Common myeloid progenitor, CD34-positive (primary cell): ENCODE measurements at regions of chr3 and their contacts with region 1.

Region 1: GRCh38 chr3:138915503-138916498 is 31.1 kb downstream of the FOXL2 start:
- DNase-seq: peak; percentile 93 to 97 (median 97)
- H3K4me3 ChIP-seq: peak overlapping the region; percentile 65 to 92 (median 83)
- H3K27ac ChIP-seq: peak overlapping the region; percentile 78 to 90
- H3K4me1 ChIP-seq: peaks cover 0 to 14% (median 9%) of the 10 kb centered on the region in 4 experiments
- H3K27me3 ChIP-seq: peaks cover 0 to 2% (median 0%) of the 10 kb centered on the region in 5 experiments

Region 2: DNA sequence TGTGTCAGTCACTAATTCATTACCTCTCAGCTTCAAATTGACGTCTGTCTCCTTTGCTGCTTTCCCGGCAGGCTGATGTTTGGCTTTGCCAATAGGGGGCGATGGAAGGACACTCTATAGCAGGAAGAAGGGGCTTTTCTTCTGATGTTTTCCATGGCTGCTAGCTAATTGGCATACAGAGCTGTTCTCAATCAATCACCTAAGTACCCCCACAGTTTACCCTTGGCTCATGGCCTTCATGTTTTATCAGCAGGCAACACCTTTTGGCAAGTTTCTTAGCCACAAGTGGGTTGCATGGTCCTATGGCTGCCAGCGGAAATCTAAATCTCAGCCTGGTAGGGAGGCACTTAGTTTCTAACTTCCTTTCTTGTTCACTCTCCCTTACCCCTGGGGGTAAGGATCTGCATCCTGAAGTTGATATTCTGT is 436.4 kb before region 1 on chr3:
- CTCF ChIA-PET with region 1: interaction called, 11 read pairs
- POLR2A ChIA-PET with region 1: no interaction called
- DNase-seq: peak; percentile 69 to 91 (median 84)
- H3K4me3 ChIP-seq: no peak overlapping the region
- H3K27ac ChIP-seq: no peak overlapping the region
- H3K4me1 ChIP-seq: peaks cover 0 to 4% (median 0%) of the 10 kb centered on the region in 4 experiments
- H3K27me3 ChIP-seq: no peaks in the 10 kb centered on the region

Region 3: GRCh38 chr3:138686771-138687221 is 229.0 kb before region 1 on chr3:
- CTCF ChIA-PET with region 1: interaction called, 51 read pairs
- POLR2A ChIA-PET with region 1: interaction called, 5 read pairs
- DNase-seq: peak; percentile 91 to 98 (median 96)
- H3K4me3 ChIP-seq: no peak overlapping the region
- H3K27ac ChIP-seq: peak overlapping the region; percentile 80 to 90
- H3K4me1 ChIP-seq: peaks cover 9 to 70% (median 25%) of the 10 kb centered on the region in 4 experiments
- H3K27me3 ChIP-seq: no peaks in the 10 kb centered on the region

Region 4: DNA sequence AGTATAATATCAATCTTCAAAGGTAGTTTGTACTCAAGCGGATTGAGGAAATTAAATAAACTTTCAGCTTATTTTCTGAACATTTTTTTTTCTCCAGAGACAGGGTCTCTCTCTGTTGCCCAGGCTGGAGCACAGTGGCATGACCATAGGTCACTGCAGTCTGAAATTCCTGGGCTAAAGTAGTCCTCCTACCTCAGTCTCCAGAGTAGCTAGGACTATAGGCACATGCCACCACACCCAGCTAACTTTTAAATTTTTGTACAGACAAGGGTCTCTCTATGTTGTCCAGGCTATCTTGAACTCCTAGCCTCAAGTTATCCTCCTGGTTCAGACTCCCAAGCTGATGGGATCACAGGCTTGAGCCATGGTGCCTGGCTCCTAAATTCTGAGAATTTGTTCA is 210.1 kb before region 1 on chr3:
- CTCF ChIA-PET with region 1: interaction called, 159 read pairs
- POLR2A ChIA-PET with region 1: no interaction called
- DNase-seq: no peak
- H3K4me3 ChIP-seq: no peak overlapping the region
- H3K27ac ChIP-seq: no peak overlapping the region
- H3K4me1 ChIP-seq: no peaks in the 10 kb centered on the region
- H3K27me3 ChIP-seq: no peaks in the 10 kb centered on the region

Region 5: DNA sequence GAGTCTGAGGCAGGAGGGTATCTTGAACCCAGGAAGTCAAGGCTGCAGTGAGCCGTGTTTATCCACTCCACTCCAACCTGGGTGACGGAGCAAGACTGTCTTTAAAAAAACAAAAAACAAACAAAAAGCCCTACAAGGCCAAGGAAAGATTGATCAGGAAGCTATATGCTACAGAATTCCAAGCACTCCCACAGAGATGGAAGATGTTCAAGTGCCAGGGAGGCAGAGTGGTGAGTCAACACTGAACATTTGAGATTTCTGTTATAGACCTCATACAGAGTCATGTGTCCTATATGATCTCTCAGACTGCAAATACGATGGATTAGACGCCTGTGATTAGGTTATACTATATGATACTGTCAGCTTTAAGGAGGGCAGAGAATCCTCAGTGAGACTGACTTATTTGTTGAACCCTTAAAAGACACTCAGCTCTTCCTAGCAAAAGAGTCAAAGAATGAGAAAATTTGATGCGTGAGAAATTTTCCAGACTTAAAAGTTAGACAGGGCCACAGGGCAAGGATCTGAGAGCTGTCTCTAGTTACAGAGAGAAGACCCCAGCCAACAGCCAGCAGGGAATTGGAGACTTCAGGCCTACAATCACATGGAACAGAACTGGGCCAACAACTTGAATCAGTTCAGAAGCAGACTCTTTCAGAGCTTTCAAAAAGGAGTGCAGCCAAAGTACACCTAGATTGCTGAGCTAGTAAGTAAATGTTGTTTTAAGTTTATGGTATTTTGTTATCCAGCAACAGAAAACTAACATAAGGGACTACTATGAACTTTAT is 188.7 kb before region 1 on chr3:
- CTCF ChIA-PET with region 1: interaction called, 14 read pairs
- POLR2A ChIA-PET with region 1: interaction called, 3 read pairs
- DNase-seq: peak in 1 of 3 donors; percentile 9
- H3K4me3 ChIP-seq: peak overlapping the region in 2 of 7 experiments; percentile 48 to 67
- H3K27ac ChIP-seq: peak overlapping the region; percentile 88 to 92
- H3K4me1 ChIP-seq: peaks cover 4 to 31% (median 15%) of the 10 kb centered on the region in 4 experiments
- H3K27me3 ChIP-seq: no peaks in the 10 kb centered on the region

Region 6: GRCh38 chr3:138898301-138898700 is 17.5 kb before region 1 on chr3:
- CTCF ChIA-PET with region 1: interaction called, 14 read pairs
- POLR2A ChIA-PET with region 1: no interaction called
- DNase-seq: no peak
- H3K4me3 ChIP-seq: no peak overlapping the region
- H3K27ac ChIP-seq: no peak overlapping the region
- H3K4me1 ChIP-seq: peaks cover 0 to 8% (median 5%) of the 10 kb centered on the region in 4 experiments
- H3K27me3 ChIP-seq: no peaks in the 10 kb centered on the region

Region 7: GRCh38 chr3:139032326-139033002 is 116.7 kb after region 1 on chr3:
- CTCF ChIA-PET with region 1: no interaction called
- POLR2A ChIA-PET with region 1: no interaction called
- DNase-seq: no peak
- H3K4me3 ChIP-seq: no peak overlapping the region
- H3K27ac ChIP-seq: no peak overlapping the region
- H3K4me1 ChIP-seq: no peaks in the 10 kb centered on the region
- H3K27me3 ChIP-seq: no peaks in the 10 kb centered on the region

Region 8: DNA sequence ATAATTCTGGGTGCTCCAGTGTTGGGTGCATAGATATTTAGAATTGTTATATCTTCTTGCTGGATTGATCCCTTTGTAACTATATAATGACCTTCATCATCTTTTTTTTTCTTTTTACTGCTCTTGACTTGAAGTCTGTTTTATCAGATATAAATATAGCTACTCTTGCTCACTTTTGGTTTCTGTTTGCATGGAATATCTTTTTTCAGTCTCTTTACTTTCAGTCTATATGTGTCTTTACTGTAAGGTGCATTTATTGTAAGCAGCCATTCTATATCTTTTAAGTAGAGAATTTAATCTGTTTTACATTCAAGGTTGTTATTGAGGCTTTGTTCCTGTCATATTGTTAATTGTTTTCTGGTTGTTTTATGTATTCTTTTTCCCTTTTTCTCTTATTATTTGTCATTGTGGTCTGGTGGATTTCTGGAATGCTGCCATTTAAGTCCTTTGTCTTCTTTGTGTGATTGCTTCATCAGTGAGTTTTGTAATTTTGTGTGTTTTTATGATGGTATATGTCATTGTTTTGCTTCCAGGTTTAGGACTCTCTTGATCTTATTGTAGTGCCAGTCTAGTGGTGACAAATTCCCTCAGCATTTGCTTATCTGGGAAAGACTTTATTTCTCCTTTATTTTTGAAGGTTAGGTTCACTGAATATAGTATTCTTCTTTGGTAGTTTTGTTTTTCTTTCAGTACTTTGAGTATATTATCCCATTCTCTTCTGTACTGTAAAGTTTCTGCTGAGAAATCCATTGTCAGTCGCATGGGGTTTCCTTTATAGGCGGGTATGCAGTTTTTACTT is 137.2 kb after region 1 on chr3:
- CTCF ChIA-PET with region 1: no interaction called
- POLR2A ChIA-PET with region 1: no interaction called
- DNase-seq: no peak
- H3K4me3 ChIP-seq: no peak overlapping the region
- H3K27ac ChIP-seq: no peak overlapping the region
- H3K4me1 ChIP-seq: no peaks in the 10 kb centered on the region
- H3K27me3 ChIP-seq: no peaks in the 10 kb centered on the region